Tibial artery (tissue), 4 donors: ENCODE measurements at regions of chr11 and their contacts with region 1.

Region 1: DNA sequence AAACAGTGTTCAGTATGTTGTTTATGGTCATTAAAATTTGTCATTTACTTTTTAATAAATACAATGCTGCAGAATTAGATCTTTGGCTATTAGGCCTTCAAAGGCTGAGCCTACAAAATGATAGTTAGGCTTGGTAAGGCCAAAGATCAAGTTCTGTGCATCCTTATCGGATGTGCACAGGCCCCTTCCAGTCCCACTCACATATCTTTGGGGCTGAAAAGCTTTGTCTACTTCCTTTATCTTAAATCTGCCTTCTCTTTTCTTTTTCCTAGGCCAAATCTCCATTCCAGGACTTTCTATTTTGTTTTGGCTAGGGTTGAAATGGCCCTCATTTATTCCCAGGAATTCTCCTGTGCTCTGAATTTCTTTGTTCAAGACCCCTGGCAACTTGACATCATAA is 3.4 kb upstream of the GLB1L2 start:
- DNase-seq: no peak
- H3K4me3 ChIP-seq: no peak overlapping the region
- H3K27ac ChIP-seq: no peak overlapping the region
- H3K4me1 ChIP-seq: peaks cover 0 to 17% (median 12%) of the 10 kb centered on the region in 4 donors
- H3K27me3 ChIP-seq: no peaks in the 10 kb centered on the region
- CTCF ChIP-seq: no peak

Region 2: GRCh38 chr11:134244655-134245054 is 83.8 kb before region 1 on chr11:
- intact Hi-C with region 1: loop called (anchors 5 kb)
- DNase-seq: no peak
- H3K4me3 ChIP-seq: no peak overlapping the region
- H3K27ac ChIP-seq: no peak overlapping the region
- H3K4me1 ChIP-seq: no peaks in the 10 kb centered on the region
- H3K27me3 ChIP-seq: no peaks in the 10 kb centered on the region
- CTCF ChIP-seq: peak; percentile 15 to 23